ENCODE measurements at regions of chr17 and their contacts with region 1.

Region 1: GRCh38 chr17:29835435-29836351 is 94.3 kb downstream of the SSH2 start:
- DNase-seq: no peak

Region 2: DNA sequence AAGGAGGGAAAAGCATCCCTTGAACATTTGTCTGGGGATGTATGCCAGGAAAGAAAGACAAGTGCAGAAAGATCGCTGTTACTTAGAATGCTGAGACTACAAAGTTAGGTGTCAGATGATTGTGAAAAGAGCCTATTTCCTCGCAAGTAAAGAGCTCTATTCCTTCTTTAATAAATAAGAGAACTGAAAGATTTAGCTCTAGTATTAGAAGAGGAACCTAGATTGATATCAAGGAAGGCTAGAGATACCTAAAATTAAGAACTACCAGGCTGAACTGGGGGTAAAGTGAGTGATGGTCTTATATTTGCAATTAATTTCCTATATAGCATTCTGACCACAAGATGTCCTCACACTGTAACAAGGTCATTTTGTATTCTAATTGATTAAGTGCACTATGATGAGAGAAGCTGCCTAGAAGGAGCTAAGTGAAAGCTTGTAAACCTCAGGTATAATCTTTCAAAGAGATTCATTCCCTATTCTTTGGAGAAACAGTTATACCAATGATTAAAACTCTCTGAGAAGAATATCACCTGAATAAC is 32.0 kb after region 1 on chr17:
- intact Hi-C with region 1: loop called in 1 of 2 experiments (anchors 1 kb)
- DNase-seq: no peak

Region 3: DNA sequence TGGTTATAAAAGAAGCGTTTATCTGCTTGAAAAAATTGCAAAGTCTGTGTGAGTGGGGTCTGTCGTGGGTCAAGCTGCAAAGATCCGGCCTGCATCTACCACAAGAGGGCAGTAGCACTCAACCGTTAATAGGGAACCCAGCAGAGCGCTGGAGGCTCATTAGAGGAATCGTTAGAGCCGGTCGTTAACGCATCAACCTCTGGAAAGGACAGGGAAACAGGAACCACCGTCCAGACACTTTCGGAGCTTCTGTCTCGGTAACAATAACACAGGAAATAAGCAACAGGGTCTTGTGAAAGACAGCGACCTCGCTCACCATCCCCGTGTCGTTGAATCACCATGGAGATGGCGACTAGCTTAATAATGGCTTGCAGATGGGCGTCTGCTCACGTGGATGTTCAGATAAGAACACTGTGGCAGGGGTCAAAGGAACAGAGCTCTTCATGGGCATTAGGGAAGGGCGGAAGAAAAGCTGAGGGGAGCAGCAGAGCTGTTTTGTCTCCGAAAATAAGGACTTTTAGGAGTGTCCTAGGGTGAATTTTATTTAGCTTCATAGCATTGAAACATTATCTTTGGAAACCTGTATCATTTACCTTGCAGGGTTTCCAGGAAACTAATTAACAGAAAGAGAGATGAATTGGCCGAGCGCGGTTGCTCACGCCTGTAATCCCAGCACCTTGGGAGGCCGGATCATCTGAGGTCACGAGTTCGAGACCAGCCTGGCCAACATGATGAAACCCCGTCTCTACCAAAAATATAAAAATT is 269.1 kb after region 1 on chr17:
- intact Hi-C with region 1: no loop called
- DNase-seq: peak; percentile 89

Measured in posterior vena cava (tissue), 2 donors.